ENCODE measurements at regions of chr1 and their contacts with region 1.

Region 1: DNA sequence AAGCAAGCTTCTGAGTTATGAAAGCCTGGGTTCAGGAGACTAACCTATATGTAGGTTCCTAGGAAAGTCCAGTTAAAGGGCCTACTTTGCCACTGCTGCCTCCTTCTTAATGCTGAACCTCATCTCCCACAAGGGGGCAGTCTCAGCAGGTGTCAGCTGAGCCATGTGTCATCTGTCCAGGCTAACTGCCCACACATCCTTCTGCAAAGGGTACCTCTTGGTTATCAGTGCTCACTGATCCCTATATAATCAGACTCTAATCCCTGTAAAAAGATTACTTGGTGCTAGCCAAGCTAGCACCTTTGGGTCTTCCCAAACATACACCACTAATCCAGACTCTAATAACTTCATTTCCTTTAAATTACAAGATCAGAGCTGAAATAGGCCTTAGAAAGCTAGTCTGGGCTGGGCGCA is 9.0 kb downstream of the PRDX1 start:
- DNase-seq: peak; percentile 56 to 67
- H3K4me3 ChIP-seq: no peak overlapping the region
- H3K27ac ChIP-seq: peak overlapping the region in 1 of 3 donors; percentile 13
- H3K4me1 ChIP-seq: peaks cover 13 to 23% of the 10 kb centered on the region in 2 donors
- H3K27me3 ChIP-seq: no peaks in the 10 kb centered on the region
- CTCF ChIP-seq: peak; percentile 21 to 56 (median 51)
- POLR2A ChIP-seq: no peak

Region 2: DNA sequence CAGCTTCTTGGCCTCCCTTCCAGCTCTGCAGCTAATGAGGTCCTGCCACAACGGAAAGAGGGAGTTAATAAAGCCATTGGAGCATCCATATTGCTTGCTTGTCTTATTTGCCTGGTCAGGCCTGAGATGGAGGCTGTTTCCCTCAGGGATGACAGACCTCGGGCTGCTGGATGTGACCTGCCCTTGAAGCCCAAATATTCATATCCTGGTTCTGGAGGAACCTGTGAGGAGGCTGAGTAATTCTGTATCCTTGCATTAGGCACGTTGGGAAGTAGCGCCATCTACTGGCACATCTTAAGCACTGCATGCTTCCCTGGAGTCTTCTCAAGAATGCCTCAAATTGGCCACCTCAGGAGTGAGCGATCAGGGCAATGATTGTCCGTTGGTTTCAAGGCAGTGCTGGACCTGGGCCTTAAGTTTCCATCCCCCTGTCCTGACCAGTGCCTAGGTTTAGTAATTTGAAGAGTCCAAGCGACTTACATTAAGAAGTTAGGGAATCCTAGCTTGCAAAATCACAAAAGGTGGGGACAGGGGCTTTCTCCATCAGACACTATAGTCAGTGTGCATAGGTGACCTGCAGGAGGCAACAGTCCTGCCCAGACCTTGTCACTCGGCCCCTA is 57.4 kb after region 1 on chr1:
- intact Hi-C with region 1: loop called (anchors 5 kb)
- DNase-seq: peak; percentile 76 to 79
- H3K4me3 ChIP-seq: no peak overlapping the region
- H3K27ac ChIP-seq: no peak overlapping the region
- H3K4me1 ChIP-seq: no peaks in the 10 kb centered on the region
- H3K27me3 ChIP-seq: no peaks in the 10 kb centered on the region
- CTCF ChIP-seq: peak; percentile 95 to 98 (median 96)
- POLR2A ChIP-seq: no peak

Measured in thyroid gland (tissue), 4 donors.